ENCODE measurements at regions of chr12 and their contacts with region 1.

Region 1: DNA sequence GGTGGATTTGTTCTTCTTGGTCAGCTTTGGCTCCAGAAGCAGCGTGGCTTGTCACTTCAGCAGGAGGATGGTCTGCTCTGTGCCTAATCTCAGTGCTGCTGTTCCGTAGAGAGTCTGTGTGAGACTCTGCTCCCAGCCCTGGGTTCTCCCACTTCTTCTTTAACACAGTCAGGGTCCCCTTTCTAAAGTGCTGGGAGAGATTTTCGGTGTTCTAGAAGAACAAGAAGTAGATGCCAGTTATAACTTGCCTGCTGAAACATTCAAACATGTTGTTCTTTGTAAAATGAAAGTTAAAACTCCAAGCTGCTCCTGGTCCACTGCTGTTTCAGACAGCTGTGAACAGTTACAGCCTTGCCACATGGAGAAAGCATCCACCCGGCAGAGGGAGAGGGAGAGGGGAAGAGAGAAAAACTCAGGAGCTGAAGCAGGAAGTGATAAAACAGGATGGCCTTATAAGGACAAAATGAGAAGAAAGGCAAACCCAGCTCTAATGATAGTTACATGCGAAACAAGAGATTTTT is 55.2 kb upstream of the CERS5 start:
- DNase-seq: peak; percentile 57
- H3K4me3 ChIP-seq: peak overlapping the region; percentile 16
- H3K27ac ChIP-seq: peak overlapping the region; percentile 45
- H3K4me1 ChIP-seq: no peaks in the 10 kb centered on the region
- H3K27me3 ChIP-seq: no peaks in the 10 kb centered on the region
- CTCF ChIP-seq: no peak

Region 2: GRCh38 chr12:49945394-49946080 is 276.8 kb before region 1 on chr12:
- intact Hi-C with region 1: no loop called
- DNase-seq: peak; percentile 86
- H3K4me3 ChIP-seq: no peak overlapping the region
- H3K27ac ChIP-seq: peak overlapping the region; percentile 33
- H3K4me1 ChIP-seq: peaks cover 8% of the 10 kb centered on the region
- H3K27me3 ChIP-seq: no peaks in the 10 kb centered on the region
- CTCF ChIP-seq: peak; percentile 84

Region 3: DNA sequence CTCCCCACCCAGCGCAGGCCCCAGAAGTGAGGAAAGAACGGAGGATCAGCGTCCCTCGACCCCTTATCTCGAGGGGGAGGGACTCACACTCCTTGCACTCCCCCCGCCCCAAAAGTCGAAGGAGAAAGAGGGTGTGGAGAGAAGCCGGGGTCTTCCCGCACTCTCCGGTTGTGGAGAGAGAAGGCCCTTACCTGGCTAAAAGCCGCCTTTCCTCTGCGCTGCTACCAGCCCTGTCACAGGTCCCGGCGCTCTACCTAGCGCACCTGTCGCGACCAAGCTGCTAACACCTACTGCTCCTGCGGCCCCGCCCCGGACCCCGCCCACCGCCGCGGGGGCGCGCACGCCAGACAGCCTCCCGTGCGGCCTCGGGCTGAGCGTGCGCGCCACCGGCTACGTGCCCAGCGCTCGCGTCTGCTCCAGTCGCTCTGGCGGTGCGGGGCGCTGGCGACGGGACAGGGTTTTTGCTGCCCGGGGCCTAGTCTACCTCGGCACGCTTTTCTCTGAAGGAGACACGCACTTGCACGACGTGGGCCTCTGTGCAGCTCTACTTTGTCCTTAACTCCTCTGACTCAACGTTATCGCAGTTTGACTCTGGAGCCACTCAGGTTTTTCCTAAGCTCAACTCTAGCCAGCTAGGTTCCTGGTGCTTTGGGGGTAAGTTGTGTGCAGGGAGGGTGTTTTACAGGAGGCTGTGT is 61.0 kb after region 1 on chr12 and contains the start of gene LIMA1:
- intact Hi-C with region 1: loop called (anchors 10 kb)
- DNase-seq: peak; percentile 95
- H3K4me3 ChIP-seq: peak within 1 kb of the TSS; percentile 73
- H3K27ac ChIP-seq: peak within 1 kb of the TSS; percentile 78
- H3K4me1 ChIP-seq: no peaks in the 10 kb centered on the region
- H3K27me3 ChIP-seq: no peaks in the 10 kb centered on the region
- CTCF ChIP-seq: no peak
- total RNA-seq, gene LIMA1: 228 to 385 TPM

Region 4: DNA sequence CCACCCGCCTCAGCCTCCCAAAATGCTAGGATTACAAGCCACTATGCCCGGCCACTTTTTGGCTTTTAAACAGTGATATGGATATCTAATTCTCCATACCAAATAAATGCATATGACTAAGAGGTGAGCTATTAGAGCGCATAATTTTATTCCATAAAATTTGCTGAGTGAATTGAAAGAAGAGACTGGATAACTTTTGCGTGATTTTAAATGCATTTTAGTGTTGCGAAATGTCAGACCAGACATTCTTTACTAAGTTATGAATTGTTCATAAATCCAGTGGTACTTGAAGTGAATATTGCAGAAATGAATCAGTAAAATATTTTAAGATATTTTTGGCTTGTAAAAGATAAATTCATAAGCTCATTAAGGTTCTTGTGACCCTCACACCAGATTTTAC is 231.5 kb after region 1 on chr12:
- intact Hi-C with region 1: no loop called
- DNase-seq: no peak
- H3K4me3 ChIP-seq: no peak overlapping the region
- H3K27ac ChIP-seq: no peak overlapping the region
- H3K4me1 ChIP-seq: no peaks in the 10 kb centered on the region
- H3K27me3 ChIP-seq: no peaks in the 10 kb centered on the region
- CTCF ChIP-seq: no peak